Psoas muscle (tissue), 8 donors: ENCODE measurements at regions of chr5 and their contacts with region 1.

Region 1: DNA sequence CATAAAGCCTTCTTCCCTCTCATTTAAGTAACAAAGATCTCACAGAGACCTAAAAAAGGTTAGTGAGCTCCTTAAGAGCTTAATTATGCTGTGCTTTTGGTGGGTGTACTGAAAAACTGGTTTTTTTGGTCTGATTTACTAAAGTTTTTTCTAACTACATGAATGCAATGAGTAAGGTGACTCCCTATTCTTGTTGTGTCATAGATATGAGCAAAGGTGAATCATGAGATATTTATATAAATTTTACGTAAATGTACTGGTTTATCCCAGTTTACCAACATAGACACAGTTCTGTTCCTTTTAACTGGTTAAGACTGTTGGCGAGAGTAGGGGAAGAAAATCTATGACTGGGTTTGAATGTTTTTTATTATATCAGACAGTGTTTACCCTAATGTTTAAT is 250.5 kb downstream of the NR2F1-AS1 start:
- DNase-seq: no peak
- ATAC-seq: peak in 3 of 4 donors; percentile 39 to 78 (median 66)
- H3K4me3 ChIP-seq: no peak overlapping the region
- H3K27ac ChIP-seq: peak overlapping the region; percentile 4
- H3K4me1 ChIP-seq: peaks cover 4% of the 10 kb centered on the region
- H3K27me3 ChIP-seq: no peaks in the 10 kb centered on the region
- CTCF ChIP-seq: no peak

Region 2: DNA sequence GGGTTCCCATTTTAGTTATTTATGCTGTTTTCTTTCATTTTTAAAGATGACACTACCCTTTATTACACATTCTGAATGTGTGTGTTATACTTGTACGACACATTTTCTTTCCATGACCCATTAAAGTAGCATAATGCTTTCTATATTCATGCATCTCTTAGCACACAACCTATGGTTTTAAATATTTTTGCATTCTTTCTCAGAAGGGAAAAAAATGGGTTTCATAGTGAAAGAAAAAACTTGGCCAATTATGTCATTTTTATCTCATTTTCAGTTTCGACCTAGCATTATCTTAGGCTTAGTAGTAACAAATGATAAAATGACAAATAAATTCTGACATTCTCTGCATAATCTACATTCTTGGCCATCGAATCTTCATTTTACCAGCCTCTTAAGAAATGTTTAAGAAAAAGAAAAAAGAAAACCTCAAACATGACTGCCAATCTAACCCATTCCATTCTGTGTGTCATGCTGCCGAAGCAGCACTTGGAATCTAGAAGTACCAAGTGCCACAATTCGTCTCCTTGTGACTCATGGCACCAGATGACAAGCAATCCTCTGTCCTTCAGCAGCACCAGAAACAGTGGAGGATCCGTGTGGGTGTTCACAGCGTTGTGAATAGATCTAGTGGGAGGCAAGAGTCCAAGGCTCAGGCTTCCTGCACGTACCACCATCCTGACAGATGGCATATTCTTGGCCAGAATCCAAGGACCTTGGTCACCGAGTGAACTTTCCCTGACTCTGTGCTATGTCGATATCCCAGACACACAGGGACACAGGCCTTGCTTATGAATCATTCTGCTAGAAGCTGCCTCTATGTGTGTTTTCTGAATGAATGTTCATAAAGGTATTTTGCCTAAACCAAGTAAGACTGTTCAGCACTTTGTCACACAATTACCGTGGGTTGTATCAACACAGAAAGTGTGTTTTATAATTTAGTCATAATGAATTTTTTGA is 252.1 kb before region 1 on chr5:
- intact Hi-C with region 1: no loop called
- DNase-seq: peak; percentile 33 to 60
- ATAC-seq: peak; percentile 93 to 99 (median 97)
- H3K4me3 ChIP-seq: no peak overlapping the region
- H3K27ac ChIP-seq: peak overlapping the region; percentile 63
- H3K4me1 ChIP-seq: peaks cover 7% of the 10 kb centered on the region
- H3K27me3 ChIP-seq: no peaks in the 10 kb centered on the region
- CTCF ChIP-seq: no peak

Region 3: GRCh38 chr5:93208141-93208751 is 122.3 kb before region 1 on chr5:
- intact Hi-C with region 1: no loop called
- DNase-seq: no peak
- ATAC-seq: no peak
- H3K4me3 ChIP-seq: no peak overlapping the region
- H3K27ac ChIP-seq: no peak overlapping the region
- H3K4me1 ChIP-seq: no peaks in the 10 kb centered on the region
- H3K27me3 ChIP-seq: no peaks in the 10 kb centered on the region
- CTCF ChIP-seq: no peak

Region 4: DNA sequence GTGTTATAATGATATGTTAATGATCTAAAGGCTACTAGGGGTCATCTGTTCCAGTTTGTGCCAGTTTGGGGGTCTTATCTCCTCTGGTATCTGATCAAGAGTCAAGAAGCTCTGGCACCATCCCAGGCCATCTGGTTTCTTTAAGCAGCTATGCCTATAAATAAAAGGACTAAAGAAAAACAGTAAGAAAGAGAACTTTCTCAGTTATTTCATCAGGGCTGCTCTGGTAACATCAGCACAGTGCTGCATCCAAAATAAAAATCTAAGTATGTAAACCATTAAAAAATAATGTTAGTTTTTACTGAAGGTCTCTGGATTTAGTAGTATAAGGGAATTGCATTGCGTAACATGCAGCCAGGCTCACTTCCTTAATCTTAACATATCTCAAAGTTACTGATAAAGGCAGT is 65.5 kb after region 1 on chr5:
- intact Hi-C with region 1: no loop called
- DNase-seq: no peak
- ATAC-seq: no peak
- H3K4me3 ChIP-seq: no peak overlapping the region
- H3K27ac ChIP-seq: no peak overlapping the region
- H3K4me1 ChIP-seq: no peaks in the 10 kb centered on the region
- H3K27me3 ChIP-seq: no peaks in the 10 kb centered on the region
- CTCF ChIP-seq: no peak

Region 5: GRCh38 chr5:93421987-93422401 is 91.5 kb after region 1 on chr5:
- intact Hi-C with region 1: no loop called
- DNase-seq: no peak
- ATAC-seq: peak in 1 of 4 donors; percentile 56
- H3K4me3 ChIP-seq: peak overlapping the region; percentile 0
- H3K27ac ChIP-seq: no peak overlapping the region
- H3K4me1 ChIP-seq: no peaks in the 10 kb centered on the region
- H3K27me3 ChIP-seq: no peaks in the 10 kb centered on the region
- CTCF ChIP-seq: no peak

Region 6: GRCh38 chr5:93915142-93915553 is 584.6 kb after region 1 on chr5:
- intact Hi-C with region 1: loop called in 1 of 2 experiments (anchors 10 kb)
- DNase-seq: no peak
- ATAC-seq: peak in 1 of 4 donors; percentile 56
- H3K4me3 ChIP-seq: no peak overlapping the region
- H3K27ac ChIP-seq: no peak overlapping the region
- H3K4me1 ChIP-seq: no peaks in the 10 kb centered on the region
- H3K27me3 ChIP-seq: no peaks in the 10 kb centered on the region
- CTCF ChIP-seq: peak; percentile 61